Breast epithelium (tissue), 4 donors: ENCODE measurements at regions of chr18 and their contacts with region 1.

Region 1: GRCh38 chr18:25416374-25416773 is 64.4 kb upstream of the ZNF521 start:
- DNase-seq: no peak
- H3K4me3 ChIP-seq: no peak overlapping the region
- H3K27ac ChIP-seq: no peak overlapping the region
- H3K4me1 ChIP-seq: no peaks in the 10 kb centered on the region
- H3K27me3 ChIP-seq: no peaks in the 10 kb centered on the region
- CTCF ChIP-seq: no peak
- POLR2A ChIP-seq: no peak

Region 2: DNA sequence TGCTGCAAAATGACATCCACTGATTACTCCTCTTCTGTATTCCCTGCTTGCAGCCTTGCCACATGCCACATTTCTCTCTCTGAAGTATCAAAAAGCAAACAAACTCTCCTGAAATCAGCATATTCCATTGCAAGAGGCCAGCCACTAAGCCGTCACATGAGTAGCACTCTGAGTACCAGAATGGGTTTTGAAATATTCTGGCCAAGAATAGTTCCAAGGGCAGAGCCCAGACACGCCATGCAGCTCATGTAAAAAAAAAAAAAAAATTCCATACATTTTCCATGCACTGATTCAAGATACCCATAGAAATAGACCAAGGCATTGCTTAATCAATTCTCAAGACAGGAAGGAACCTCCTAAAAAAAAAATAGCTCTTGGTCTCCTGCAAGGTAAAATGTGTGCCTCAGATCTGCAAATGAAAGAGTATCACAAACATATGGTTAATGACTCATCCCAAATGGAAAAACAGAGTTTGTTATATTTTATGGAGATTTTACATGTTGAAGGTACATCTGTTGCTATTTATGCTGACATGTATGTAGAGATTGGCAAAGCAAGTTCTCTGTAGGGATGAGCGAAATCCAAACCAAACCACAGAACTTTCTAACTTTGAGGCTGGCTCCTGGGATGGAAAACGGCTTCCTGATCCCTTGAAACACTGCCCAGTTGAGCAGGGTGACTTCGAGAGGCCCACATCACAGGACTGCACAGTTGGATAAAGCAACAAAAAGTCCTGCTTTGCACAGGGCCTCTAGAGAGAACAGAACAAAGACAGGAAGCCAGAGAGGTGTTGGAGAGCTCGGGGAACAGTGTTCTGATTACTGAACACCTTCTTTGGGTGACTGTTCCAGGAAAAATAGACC is 410.6 kb before region 1 on chr18:
- intact Hi-C with region 1: loop called (anchors 5 kb)
- DNase-seq: no peak
- H3K4me3 ChIP-seq: no peak overlapping the region
- H3K27ac ChIP-seq: no peak overlapping the region
- H3K4me1 ChIP-seq: no peaks in the 10 kb centered on the region
- H3K27me3 ChIP-seq: no peaks in the 10 kb centered on the region
- CTCF ChIP-seq: no peak
- POLR2A ChIP-seq: no peak

Region 3: DNA sequence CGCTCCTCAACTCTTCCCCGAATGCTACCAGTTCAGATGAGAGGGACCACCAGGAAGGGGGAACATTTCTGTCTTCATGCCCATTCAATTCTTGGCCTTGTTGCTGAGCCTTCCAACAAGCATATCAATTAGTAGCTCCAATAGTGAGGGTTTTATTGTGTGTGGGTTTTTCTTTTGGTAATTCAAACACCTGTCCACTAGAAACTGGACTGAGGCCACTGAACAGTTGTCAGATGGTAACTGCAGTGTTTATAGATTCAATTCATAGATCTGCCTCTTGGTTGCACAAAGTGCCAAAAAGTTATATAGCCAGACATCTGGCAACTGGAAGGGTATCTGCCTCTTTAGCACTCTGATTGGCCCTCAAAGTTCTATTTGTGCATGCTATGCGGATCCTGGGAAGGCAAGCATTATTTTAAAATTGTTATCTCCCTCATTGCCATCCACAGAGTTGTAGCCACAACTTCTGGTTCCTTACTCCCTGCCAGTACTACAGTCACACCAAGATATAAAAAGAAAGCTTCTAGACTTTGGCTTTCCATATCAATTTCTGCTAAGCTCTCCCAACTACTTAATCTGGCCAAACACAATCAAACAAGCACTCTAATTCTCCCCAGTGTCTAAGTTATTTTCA is 18.9 kb after region 1 on chr18:
- intact Hi-C with region 1: no loop called
- DNase-seq: no peak
- H3K4me3 ChIP-seq: no peak overlapping the region
- H3K27ac ChIP-seq: no peak overlapping the region
- H3K4me1 ChIP-seq: no peaks in the 10 kb centered on the region
- H3K27me3 ChIP-seq: no peaks in the 10 kb centered on the region
- CTCF ChIP-seq: no peak
- POLR2A ChIP-seq: no peak